A673 (cell line): ENCODE measurements at regions of chr11 and their contacts with region 1.

Region 1: GRCh38 chr11:108697872-108698473 is 33.1 kb downstream of the DDX10 start:
- DNase-seq: peak; percentile 85
- H3K4me3 ChIP-seq: no peak overlapping the region
- H3K27ac ChIP-seq: no peak overlapping the region
- H3K4me1 ChIP-seq: no peaks in the 10 kb centered on the region
- H3K27me3 ChIP-seq: no peaks in the 10 kb centered on the region
- CTCF ChIP-seq: peak; percentile 95

Region 2: GRCh38 chr11:108559340-108559739 is 138.6 kb before region 1 on chr11:
- CTCF ChIA-PET with region 1: no interaction called
- POLR2A ChIA-PET with region 1: no interaction called
- intact Hi-C with region 1: no loop called
- DNase-seq: no peak
- H3K4me3 ChIP-seq: no peak overlapping the region
- H3K27ac ChIP-seq: no peak overlapping the region
- H3K4me1 ChIP-seq: no peaks in the 10 kb centered on the region
- H3K27me3 ChIP-seq: no peaks in the 10 kb centered on the region
- CTCF ChIP-seq: no peak

Region 3: GRCh38 chr11:108871152-108871551 is 173.2 kb after region 1 on chr11:
- CTCF ChIA-PET with region 1: interaction called, 11 read pairs
- POLR2A ChIA-PET with region 1: no interaction called
- intact Hi-C with region 1: loop called (anchors 1 kb)
- DNase-seq: peak; percentile 76
- H3K4me3 ChIP-seq: no peak overlapping the region
- H3K27ac ChIP-seq: no peak overlapping the region
- H3K4me1 ChIP-seq: peaks cover 36% of the 10 kb centered on the region
- H3K27me3 ChIP-seq: no peaks in the 10 kb centered on the region
- CTCF ChIP-seq: peak; percentile 79

Region 4: DNA sequence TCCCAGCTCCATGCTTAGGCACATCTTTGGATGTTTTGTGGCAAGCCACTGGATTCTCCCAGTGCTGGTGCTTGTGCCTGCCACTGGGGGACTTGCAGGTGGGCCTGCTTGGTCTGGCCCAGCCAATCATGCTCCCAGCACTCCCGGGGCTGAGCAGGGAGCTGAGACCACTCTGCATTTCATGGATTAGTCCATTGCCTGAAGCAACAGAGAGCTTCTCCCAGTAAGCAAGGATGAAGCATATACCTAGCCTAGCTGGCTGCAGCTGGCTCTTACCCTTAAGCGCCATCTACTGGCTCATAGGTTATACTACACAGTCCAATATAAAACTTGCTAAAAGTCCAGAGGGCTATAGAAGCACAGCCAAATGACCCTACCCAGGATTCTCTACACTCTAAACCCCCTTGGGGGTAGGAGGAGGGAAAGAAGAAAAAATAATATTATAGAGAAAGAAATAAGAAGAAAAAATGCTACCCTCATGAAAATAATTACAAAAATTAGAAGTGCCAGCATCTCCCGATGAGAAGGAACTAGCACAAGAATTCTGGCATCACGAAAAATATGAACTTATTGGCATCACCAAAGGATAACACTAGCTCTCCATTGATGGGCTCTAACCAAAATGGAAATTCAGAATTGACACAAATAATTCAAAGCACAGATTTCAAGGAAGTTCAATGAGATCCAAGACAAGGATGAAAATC is 999.3 kb after region 1 on chr11:
- CTCF ChIA-PET with region 1: interaction called, 11 read pairs
- POLR2A ChIA-PET with region 1: no interaction called
- intact Hi-C with region 1: loop called (anchors 1 kb)
- DNase-seq: peak; percentile 75
- H3K4me3 ChIP-seq: no peak overlapping the region
- H3K27ac ChIP-seq: no peak overlapping the region
- H3K4me1 ChIP-seq: no peaks in the 10 kb centered on the region
- H3K27me3 ChIP-seq: no peaks in the 10 kb centered on the region
- CTCF ChIP-seq: peak; percentile 91